ENCODE measurements at regions of chr22 and their contacts with region 1.

Region 1: DNA sequence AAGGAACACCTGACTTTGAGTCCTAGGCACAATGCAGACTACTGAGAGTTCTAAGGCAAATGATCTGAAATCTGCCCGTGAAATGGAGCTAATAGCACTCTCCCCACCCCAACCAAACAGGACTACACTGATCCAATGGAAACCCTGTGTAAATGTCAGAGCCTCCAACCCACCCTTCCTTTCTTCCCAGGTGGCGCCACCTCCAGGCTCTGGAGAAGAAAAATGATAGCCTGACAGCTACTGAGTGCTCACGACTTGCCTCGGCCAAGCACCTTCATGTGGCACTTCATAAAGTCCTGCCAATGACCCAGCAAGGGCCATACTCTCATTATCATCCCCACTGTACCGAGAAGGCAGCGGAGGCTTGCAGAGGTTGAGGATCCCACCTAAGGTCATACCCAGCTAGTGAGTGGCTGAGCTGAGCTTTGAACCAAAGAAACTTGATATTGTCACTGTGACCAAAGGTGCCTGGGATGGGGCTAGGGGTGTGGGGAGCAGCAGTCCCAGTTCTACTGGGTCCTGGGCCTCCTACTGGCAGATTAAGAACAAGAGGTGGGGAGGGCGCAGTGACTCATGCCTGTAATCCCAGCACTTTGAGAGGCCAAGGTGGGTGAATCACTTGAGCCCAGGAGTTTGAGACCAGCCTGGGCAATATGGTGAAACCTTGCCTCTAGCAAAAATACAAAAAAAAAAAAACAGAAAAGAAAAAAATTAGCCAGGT is 20.5 kb downstream of the TST start:
- DNase-seq: no peak
- H3K4me3 ChIP-seq: no peak overlapping the region
- H3K4me3 Mint-ChIP-seq: no peak overlapping the region
- H3K27ac ChIP-seq: no peak overlapping the region
- H3K27ac Mint-ChIP-seq: peak overlapping the region in 1 of 7 donors; percentile 44
- H3K4me1 ChIP-seq: no peaks in the 10 kb centered on the region
- H3K4me1 Mint-ChIP-seq: no peaks in the 10 kb centered on the region
- H3K27me3 ChIP-seq: no peaks in the 10 kb centered on the region
- H3K27me3 Mint-ChIP-seq: peaks cover 2 to 10% (median 10%) of the 10 kb centered on the region in 3 donors
- CTCF ChIP-seq: no peak

Region 2: DNA sequence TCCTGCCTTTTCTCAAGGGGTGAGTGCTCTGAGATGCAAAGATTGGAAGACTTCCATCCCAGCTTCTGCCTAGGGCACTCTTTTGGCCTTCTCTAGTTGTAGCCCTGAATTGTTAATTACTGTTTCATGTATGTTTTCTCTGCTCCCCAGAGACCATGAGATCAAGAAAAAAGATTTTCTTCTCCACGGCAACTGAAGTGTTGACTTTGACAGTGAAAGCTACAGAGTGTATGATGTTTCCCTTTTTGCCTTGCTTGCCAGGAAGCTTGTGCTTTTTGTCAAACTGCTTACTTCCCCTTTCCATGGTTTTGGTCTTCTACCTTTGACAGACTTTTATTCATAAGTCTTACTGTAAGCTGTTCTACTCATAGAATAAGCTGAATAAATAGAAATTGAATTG is 446.5 kb before region 1 on chr22:
- intact Hi-C with region 1: loop called in 1 of 2 experiments (anchors 10 kb)
- DNase-seq: peak; percentile 37 to 59 (median 57)
- H3K4me3 ChIP-seq: no peak overlapping the region
- H3K4me3 Mint-ChIP-seq: peak overlapping the region in 1 of 2 donors; percentile 67
- H3K27ac ChIP-seq: peak overlapping the region in 1 of 2 donors; percentile 48
- H3K27ac Mint-ChIP-seq: peak overlapping the region in 5 of 7 donors; percentile 11 to 84 (median 54)
- H3K4me1 ChIP-seq: peaks cover 13 to 16% of the 10 kb centered on the region in 2 donors
- H3K4me1 Mint-ChIP-seq: peaks cover 17% of the 10 kb centered on the region
- H3K27me3 ChIP-seq: peaks cover 0 to 4% of the 10 kb centered on the region in 2 donors
- H3K27me3 Mint-ChIP-seq: peaks cover 7 to 15% (median 9%) of the 10 kb centered on the region in 3 donors
- CTCF ChIP-seq: no peak

Region 3: GRCh38 chr22:36856121-36856791 is 142.5 kb before region 1 on chr22:
- intact Hi-C with region 1: no loop called
- DNase-seq: peak; percentile 89 to 92 (median 90)
- H3K4me3 ChIP-seq: peak overlapping the region in 1 of 3 experiments; percentile 39
- H3K4me3 Mint-ChIP-seq: peak overlapping the region; percentile 39 to 94
- H3K27ac ChIP-seq: no peak overlapping the region
- H3K27ac Mint-ChIP-seq: peak overlapping the region in 3 of 7 donors; percentile 59 to 91 (median 74)
- H3K4me1 ChIP-seq: peaks cover 58 to 67% of the 10 kb centered on the region in 2 donors
- H3K4me1 Mint-ChIP-seq: peaks cover 60% of the 10 kb centered on the region
- H3K27me3 ChIP-seq: peaks cover 0 to 4% of the 10 kb centered on the region in 2 donors
- H3K27me3 Mint-ChIP-seq: peaks cover under 1 to 3% (median 2%) of the 10 kb centered on the region in 3 donors
- CTCF ChIP-seq: peak; percentile 100

Measured in CD14-positive monocyte (primary cell).